GM13977 (cell line): ENCODE measurements at regions of chr17 and their contacts with region 1.

Region 1: DNA sequence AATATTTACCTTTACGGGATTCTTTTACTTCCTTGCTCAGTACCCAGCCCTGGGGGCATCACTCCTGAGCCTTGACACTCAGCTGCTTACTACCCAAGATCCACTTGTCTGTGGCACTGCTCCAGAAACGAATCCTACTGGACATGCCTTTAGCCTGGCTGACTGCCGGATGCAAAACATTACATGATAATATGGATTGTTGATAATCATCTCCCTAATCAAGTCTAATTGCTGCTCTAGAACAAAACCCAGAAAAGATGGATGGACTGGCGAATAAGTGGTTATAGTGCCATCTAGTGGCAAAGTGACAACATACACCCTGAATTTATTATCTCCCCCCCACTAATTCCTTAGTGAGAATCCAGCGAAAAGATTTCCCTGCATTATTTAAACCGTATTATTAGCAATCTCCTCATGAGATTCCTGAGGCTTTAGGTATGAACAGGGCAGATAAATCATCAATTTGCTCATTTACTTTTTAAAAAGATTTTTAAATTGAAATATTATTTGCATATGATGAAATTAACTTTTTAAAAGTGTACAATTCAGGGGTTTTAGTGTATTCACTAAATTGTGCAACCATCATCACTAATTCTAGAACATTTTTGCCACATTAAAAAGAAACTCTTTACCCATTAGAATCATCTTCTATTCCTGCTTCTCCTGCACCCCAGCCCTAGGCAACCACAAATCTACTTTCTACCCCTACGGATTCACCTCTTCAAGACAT is 61.6 kb downstream of the RGS9 start:
- DNase-seq: peak; percentile 74
- CTCF ChIP-seq: peak; percentile 70

Region 2: GRCh38 chr17:64974750-64975328 is 224.0 kb before region 1 on chr17:
- in situ Hi-C with region 1: loop called (anchors 25 kb)
- DNase-seq: no peak
- CTCF ChIP-seq: no peak

Region 3: GRCh38 chr17:65143889-65144604 is 54.8 kb before region 1 on chr17:
- in situ Hi-C with region 1: loop called (anchors 10 kb)
- DNase-seq: no peak
- CTCF ChIP-seq: no peak

Region 4: DNA sequence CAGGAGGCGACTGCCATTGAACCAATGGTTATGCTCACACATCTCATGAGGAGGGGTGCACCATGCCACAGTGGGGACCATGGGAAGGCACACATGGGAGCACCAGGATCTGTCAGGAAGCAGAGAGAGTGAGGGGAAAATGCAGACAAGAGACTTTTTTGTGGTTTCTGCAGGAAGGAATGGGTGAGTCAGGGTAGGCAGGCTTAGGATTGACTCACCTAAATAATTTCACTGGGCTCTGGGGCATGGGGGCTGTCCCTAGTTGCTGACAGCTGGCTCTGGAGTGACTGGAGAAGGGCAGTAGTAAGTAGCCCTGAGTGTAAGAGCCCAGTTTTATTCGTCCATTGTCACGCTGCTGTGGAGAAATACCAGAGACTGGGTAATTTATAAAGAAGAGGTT is 160.2 kb after region 1 on chr17:
- in situ Hi-C with region 1: no loop called
- DNase-seq: no peak
- CTCF ChIP-seq: no peak